Common myeloid progenitor, CD34-positive (primary cell): ENCODE measurements at regions of chr3 and their contacts with region 1.

Region 1: GRCh38 chr3:161409069-161409468 is 37.8 kb upstream of the SPTSSB start:
- DNase-seq: peak; percentile 37 to 65 (median 57)
- H3K4me3 ChIP-seq: no peak overlapping the region
- H3K27ac ChIP-seq: no peak overlapping the region
- H3K4me1 ChIP-seq: peaks cover 0 to 12% (median 7%) of the 10 kb centered on the region in 4 experiments
- H3K27me3 ChIP-seq: no peaks in the 10 kb centered on the region

Region 2: GRCh38 chr3:161274719-161275298 is 134.3 kb before region 1 on chr3:
- CTCF ChIA-PET with region 1: interaction called, 38 read pairs
- POLR2A ChIA-PET with region 1: no interaction called
- DNase-seq: peak; percentile 59 to 81 (median 74)
- H3K4me3 ChIP-seq: no peak overlapping the region
- H3K27ac ChIP-seq: peak overlapping the region in 1 of 2 experiments; percentile 2
- H3K4me1 ChIP-seq: no peaks in the 10 kb centered on the region
- H3K27me3 ChIP-seq: no peaks in the 10 kb centered on the region

Region 3: DNA sequence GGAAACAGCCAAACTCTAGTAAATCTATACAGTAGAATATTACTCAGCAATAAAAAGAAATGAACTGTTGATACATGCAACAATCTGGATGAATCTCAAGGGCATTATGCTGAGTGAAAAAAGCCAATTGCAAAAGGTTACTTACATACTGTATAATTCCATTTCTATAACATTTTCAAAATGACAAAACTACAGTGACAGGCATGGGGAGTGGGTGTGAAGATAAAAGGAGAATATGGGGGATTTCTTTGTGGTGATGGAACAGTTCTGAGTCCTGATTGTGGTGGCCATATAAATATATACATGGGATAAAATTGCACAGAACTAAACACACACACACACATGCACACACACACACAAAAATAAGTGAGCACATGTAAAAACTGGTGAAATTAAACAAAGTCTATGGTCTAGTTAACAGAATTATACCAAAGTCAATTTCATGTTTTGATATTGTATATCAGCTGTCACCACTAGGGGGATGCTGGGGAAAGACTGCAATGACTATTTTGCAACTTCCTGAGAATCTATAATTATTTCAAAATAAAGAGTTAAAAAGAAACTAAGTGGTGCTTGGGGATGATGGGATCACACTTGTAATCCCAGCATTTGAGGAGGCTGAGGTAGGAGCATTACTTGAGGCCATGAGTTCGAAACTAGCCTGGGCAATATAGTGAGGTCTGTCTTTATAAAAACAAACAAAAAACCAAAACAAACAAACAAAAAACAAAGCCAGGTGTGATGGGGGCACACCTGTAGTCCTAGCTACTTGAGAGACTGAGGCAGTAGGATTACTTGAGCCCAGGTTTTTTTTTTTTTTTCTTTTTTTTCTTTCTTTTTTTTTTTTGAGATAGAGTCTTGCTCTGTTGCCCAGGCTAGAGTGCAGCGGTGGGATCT is 103.7 kb before region 1 on chr3:
- CTCF ChIA-PET with region 1: interaction called, 16 read pairs
- POLR2A ChIA-PET with region 1: no interaction called
- DNase-seq: peak; percentile 15 to 53 (median 39)
- H3K4me3 ChIP-seq: no peak overlapping the region
- H3K27ac ChIP-seq: no peak overlapping the region
- H3K4me1 ChIP-seq: no peaks in the 10 kb centered on the region
- H3K27me3 ChIP-seq: peaks cover 0 to 1% (median 0%) of the 10 kb centered on the region in 5 experiments

Region 4: DNA sequence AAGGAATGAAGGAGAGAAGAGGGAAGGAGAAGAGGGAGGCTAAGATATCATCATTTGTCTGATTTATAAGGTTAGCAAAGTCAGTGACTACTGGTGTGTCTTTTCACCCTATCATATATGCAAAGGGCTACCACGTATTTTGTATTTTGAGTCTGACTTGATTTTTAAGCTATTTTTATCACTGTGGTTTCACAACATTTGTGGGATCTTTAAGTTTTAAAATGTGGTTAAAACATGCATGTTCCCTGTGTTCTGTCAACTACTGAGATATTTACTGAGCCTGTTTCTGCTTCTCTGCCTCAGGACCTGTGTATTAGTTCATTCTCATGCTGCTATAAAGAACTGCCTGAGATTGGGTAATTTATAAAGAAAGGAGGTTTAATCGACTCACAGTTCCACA is 15.3 kb before region 1 on chr3:
- CTCF ChIA-PET with region 1: interaction called, 12 read pairs
- POLR2A ChIA-PET with region 1: no interaction called
- DNase-seq: no peak
- H3K4me3 ChIP-seq: no peak overlapping the region
- H3K27ac ChIP-seq: no peak overlapping the region
- H3K4me1 ChIP-seq: peaks cover 0 to 15% (median 0%) of the 10 kb centered on the region in 4 experiments
- H3K27me3 ChIP-seq: no peaks in the 10 kb centered on the region

Region 5: DNA sequence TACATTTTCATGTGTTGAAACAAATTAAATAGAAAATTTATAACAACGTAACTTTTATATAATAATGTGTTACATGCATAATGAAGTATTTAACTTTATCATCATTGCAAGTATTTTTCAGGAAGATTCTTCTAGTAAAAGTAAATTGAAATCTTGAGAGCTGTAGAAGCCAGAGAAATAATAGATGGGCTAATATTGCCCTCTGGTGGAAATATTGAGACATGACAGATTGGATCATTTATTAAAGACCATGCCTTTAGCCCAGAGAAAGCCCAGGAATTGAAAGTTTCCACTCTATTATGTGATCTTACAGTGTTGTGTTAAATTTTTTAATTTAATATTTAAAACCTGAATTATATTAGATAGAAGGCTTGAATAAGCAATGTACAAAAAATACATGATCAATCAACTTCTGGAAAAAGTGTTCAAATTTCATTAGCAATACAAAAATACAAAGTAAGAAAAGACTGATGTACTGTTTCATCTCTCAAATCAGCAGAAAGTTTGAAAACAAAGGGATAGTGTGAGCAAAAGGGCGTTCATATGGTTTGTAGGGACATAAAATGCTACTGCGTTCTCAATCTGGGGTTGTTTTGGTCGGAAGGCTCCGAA is 14.9 kb after region 1 on chr3:
- CTCF ChIA-PET with region 1: interaction called, 15 read pairs
- POLR2A ChIA-PET with region 1: no interaction called
- DNase-seq: peak; percentile 27 to 68 (median 50)
- H3K4me3 ChIP-seq: no peak overlapping the region
- H3K27ac ChIP-seq: no peak overlapping the region
- H3K4me1 ChIP-seq: no peaks in the 10 kb centered on the region
- H3K27me3 ChIP-seq: no peaks in the 10 kb centered on the region